A549 (cell line): ENCODE measurements at regions of chr15 and their contacts with region 1.

Region 1: DNA sequence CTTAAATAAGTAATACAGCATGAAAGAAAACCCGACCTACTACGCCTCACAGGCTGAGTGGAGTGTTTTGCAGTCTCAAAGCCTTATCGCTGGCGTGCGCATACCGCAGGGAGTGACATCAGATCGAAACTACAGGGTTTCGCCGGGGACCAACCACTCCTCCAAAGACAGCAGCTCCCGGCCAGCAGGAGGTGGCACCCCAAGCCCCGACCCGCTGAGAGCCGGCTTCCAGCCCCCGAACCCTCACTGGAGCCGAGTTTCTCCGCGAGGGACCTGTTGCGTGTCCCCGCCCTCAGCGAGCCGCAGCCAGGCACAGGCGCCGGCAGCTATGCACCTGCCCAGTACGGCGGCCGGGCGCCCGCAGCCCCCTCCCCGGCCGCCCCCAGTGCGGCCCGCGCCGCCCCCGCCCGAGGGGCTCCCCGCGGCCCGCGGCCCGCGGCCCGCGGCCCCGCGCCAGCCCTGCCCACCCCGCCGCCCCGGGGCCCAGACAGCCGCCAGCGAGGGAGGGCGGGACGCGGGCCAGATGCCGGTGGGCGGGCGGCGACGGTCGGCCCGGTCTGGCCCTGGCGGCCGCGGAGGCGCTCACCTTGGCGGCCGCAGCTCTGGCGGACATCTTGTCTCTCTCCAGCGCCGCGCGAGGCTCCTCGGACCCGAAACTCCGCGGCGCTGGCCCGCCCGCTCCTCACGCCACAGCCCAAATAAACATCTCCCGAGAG is 694 bp downstream of the TJP1 start:
- DNase-seq: peak; percentile 75 to 89
- ATAC-seq: peak; percentile 79 to 81
- H3K4me3 ChIP-seq: peak overlapping the region; percentile 66
- H3K27ac ChIP-seq: peak overlapping the region; percentile 95 to 96
- H3K4me1 ChIP-seq: peaks cover 16% of the 10 kb centered on the region; the same call in 2 of the 3 replicates
- CTCF ChIP-seq: no peak
- EP300 ChIP-seq: no peak
- POLR2A ChIP-seq: no peak
- RAD21 ChIP-seq: no peak; a peak in 2 of 5 replicates

Region 2: GRCh38 chr15:29835301-29835700 is 13.7 kb after region 1 on chr15:
- CTCF ChIA-PET with region 1: interaction called, 6 read pairs
- POLR2A ChIA-PET with region 1: interaction called, 22 read pairs
- DNase-seq: no peak
- ATAC-seq: no peak; a peak in 1 of 6 replicates
- H3K4me3 ChIP-seq: no peak overlapping the region
- H3K27ac ChIP-seq: no peak overlapping the region
- H3K4me1 ChIP-seq: peaks cover 11% of the 10 kb centered on the region
- CTCF ChIP-seq: no peak
- EP300 ChIP-seq: no peak
- POLR2A ChIP-seq: no peak
- RAD21 ChIP-seq: no peak